ENCODE measurements at regions of chr1 and their contacts with region 1.

Region 1: GRCh38 chr1:197775282-197776262 is at the start of gene DENND1B:
- DNase-seq: peak; percentile 69
- H3K4me3 ChIP-seq: peak within 1 kb of the TSS; percentile 76 to 78 (median 77)
- H3K27ac ChIP-seq: peak within 1 kb of the TSS; percentile 83
- H3K4me1 ChIP-seq: peaks cover 23% of the 10 kb centered on the region
- H3K27me3 ChIP-seq: no peaks in the 10 kb centered on the region
- CTCF ChIP-seq: peak in 1 of 2 donors; percentile 22
- total RNA-seq, gene DENND1B: 12.5 to 31.7 TPM

Region 2: DNA sequence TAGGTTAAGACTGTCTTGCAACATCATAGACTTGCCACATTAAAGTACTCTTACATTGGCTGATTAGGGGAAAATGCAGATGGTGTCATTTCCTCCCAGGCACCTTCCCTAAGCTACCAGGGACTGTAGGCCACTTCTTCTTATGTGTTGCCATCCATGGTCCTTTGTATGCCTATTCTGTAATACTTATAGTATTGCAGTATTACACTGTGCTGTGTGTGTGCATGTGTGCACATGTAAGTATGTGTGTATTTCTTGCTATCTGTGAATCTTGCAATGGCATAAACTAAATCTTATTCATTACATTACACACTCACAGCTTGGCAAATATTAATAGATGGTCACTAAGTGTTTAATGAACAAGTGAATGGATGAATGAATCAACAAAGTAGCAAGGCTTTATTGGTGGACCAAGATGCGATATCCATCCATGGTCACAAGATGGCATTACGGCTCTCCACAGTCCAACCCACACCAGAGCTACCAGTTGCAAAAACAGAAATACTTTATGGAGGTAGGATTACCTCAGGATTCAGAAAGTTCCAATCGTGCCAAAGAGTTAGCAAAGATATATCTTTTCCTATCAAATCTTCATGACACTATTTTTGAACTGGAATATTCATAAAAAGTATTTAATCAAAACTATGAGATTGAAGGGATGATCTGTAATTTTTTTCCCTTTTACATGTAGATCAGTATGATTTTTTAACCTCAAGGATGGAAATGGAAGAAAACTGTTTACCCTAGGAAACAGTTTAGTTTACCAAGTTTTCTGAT is 160.5 kb before region 1 on chr1:
- CTCF ChIA-PET with region 1: no interaction called
- dilution Hi-C with region 1: no loop called
- in situ Hi-C with region 1: no loop called
- intact Hi-C with region 1: loop called (anchors 10 kb)
- DNase-seq: peak; percentile 19
- H3K4me3 ChIP-seq: no peak overlapping the region
- H3K27ac ChIP-seq: no peak overlapping the region
- H3K4me1 ChIP-seq: no peaks in the 10 kb centered on the region
- H3K27me3 ChIP-seq: no peaks in the 10 kb centered on the region
- CTCF ChIP-seq: peak; percentile 50 to 70

Region 3: GRCh38 chr1:197692965-197693364 is 82.6 kb before region 1 on chr1:
- CTCF ChIA-PET with region 1: no interaction called
- dilution Hi-C with region 1: no loop called
- in situ Hi-C with region 1: no loop called
- intact Hi-C with region 1: loop called (anchors 2 kb)
- DNase-seq: peak; percentile 11
- H3K4me3 ChIP-seq: no peak overlapping the region
- H3K27ac ChIP-seq: no peak overlapping the region
- H3K4me1 ChIP-seq: peaks cover 5% of the 10 kb centered on the region
- H3K27me3 ChIP-seq: no peaks in the 10 kb centered on the region
- CTCF ChIP-seq: peak; percentile 29 to 55

Region 4: DNA sequence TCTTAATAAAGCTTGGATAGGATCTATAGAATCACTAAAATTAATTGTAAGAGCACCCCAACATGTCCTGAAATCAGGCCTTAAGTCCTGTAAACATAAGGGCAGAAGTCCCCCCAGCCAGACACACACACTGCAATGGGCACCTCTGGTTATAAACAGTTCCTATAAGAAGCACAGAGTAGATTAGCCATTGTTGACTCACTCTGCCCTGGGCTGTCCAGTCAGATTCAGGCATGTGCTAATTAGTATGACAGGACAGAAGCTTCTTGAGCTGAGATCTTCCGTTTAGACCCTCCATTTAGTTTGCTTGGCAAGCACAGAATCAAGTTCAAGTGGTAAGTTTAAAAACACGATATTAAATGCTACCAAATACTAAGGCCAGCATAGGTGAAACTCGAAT is 11.5 kb after region 1 on chr1:
- CTCF ChIA-PET with region 1: no interaction called
- dilution Hi-C with region 1: no loop called
- in situ Hi-C with region 1: no loop called
- intact Hi-C with region 1: loop called (anchors 1 kb)
- DNase-seq: peak; percentile 82
- H3K4me3 ChIP-seq: no peak overlapping the region
- H3K27ac ChIP-seq: no peak overlapping the region
- H3K4me1 ChIP-seq: peaks cover 45% of the 10 kb centered on the region
- H3K27me3 ChIP-seq: no peaks in the 10 kb centered on the region
- CTCF ChIP-seq: no peak

Measured in mammary epithelial cell (primary cell).